ENCODE measurements at regions of chr13 and their contacts with region 1.

Region 1: GRCh38 chr13:50893211-50893852 is 16.3 kb upstream of the RNASEH2B start:
- DNase-seq: peak; percentile 37
- ATAC-seq: peak; percentile 94
- H3K4me3 Mint-ChIP-seq: peak overlapping the region; percentile 50
- H3K27ac Mint-ChIP-seq: peak overlapping the region; percentile 89
- H3K4me1 Mint-ChIP-seq: peaks cover 40% of the 10 kb centered on the region
- H3K27me3 Mint-ChIP-seq: no peaks in the 10 kb centered on the region

Region 2: DNA sequence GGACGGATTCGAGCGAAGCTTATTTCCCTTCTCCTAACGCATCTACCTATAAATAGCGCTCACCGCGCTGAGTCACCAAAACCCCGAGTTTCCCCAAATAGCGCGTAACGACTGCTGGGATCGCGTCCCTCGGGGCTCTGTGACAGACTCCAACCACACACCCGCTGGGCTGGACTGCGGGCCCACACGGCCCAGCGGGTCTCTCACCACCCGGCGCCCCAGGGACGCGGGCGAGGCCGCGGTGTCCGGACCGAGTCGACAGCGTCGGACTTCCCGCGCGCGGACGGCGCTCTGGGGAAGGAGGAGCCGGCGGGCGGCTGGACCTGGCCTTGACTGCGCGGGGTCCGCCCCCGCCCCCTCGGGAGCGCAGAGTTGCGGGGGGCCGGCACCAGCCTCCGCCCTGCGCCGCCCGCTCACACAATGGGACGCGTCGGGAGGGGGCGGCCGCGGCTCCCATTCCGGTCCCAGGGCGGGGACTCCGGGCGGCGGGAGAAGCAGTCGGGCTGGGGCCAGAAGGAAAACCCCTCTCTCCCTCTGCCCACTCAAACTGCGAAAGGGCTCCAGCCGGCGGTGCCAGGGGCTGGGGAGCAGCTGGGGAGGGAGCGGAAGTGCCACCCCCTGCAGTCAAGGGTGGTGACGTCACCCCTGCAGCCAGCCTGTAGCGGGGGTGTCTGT is 769.3 kb before region 1 on chr13:
- CTCF ChIA-PET with region 1: interaction called, 3 read pairs
- POLR2A ChIA-PET with region 1: no interaction called
- intact Hi-C with region 1: loop called in 1 of 2 experiments (anchors 2 kb)
- DNase-seq: peak; percentile 86
- ATAC-seq: peak; percentile 68
- H3K4me3 Mint-ChIP-seq: peak overlapping the region; percentile 72
- H3K27ac Mint-ChIP-seq: peak overlapping the region; percentile 89
- H3K4me1 Mint-ChIP-seq: peaks cover 49% of the 10 kb centered on the region
- H3K27me3 Mint-ChIP-seq: peaks cover 13% of the 10 kb centered on the region